ENCODE measurements at regions of chr2 and their contacts with region 1.

Region 1: DNA sequence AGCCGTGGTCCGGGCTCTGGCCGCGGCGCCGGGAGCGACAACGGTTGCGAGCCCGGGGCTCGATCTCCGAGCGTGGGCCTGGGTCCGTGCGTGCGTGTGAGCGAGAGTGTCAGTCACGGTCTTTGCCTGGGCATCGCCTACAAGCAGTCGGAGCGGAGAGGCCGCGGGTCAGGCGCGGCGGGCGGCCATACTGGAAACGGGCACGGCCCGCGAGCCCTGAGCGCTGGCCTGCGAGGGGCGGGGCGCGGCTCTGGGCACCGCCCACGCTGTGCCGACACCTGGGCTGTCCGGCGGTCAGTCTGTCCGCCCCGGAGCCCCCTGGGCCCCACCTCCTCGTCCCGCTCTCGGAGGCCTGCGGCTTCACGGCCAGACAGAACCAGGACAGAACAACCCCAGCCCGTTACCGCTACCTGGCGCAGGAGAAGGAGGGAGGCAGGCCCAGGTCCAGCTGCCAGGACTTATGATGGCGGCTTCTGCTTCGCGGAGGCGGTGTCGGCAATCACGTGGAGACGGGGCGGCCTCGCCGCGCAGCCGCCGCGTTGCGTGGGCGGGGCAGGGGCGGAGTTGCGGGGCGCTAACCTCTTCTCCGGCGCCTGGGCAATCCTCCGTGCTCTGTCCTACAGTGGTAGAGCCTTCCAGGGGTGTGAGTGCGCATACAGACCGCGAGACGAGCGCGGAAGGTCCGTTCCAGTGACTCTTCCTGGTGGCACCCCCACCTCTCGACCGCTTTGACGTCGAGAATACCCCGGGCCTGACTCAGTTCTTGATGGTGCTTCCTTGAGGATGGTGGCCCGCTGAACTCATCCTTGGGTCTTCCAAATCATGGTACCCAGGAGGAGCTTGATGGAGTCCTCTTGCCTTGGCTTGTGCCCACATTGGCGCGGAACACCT is at the start of gene TMEM131:
- DNase-seq: peak; percentile 91
- ATAC-seq: peak; percentile 85
- H3K4me3 ChIP-seq: peak within 1 kb of the TSS; percentile 98
- H3K27ac ChIP-seq: peak within 1 kb of the TSS; percentile 75
- H3K4me1 ChIP-seq: peaks cover 43% of the 10 kb centered on the region
- H3K27me3 ChIP-seq: no peaks in the 10 kb centered on the region
- CTCF ChIP-seq: no peak
- total RNA-seq, gene TMEM131: 21.1 and 27.2 TPM in 2 replicates

Region 2: GRCh38 chr2:97740590-97741182 is 255.3 kb before region 1 on chr2:
- CTCF ChIA-PET with region 1: no interaction called
- POLR2A ChIA-PET with region 1: no interaction called
- intact Hi-C with region 1: no loop called
- DNase-seq: peak; percentile 49
- ATAC-seq: no peak
- H3K4me3 ChIP-seq: no peak overlapping the region
- H3K27ac ChIP-seq: no peak overlapping the region
- H3K4me1 ChIP-seq: peaks cover 11% of the 10 kb centered on the region
- H3K27me3 ChIP-seq: no peaks in the 10 kb centered on the region
- CTCF ChIP-seq: peak; percentile 75

Region 3: DNA sequence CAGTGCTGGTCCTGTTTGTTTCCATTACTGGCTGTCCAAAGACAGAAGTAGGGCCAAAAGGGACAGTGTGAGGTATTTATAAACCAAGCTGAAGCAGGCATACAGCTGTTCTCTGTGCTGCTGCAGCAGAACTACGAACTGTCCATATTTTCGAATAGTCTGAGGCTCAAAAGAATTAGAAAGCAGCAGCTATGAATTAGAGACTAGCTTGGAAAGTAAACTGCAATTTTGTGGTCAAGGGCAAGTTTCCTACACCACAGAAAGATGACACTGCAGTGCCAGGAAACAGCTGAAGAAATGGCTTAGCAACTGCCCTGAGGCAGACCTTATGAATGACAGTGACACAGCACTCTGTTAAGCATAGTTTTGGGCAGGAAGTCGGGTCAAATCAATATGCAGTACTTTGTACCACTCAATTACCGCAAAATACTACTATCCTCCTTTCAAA is 125.6 kb before region 1 on chr2:
- CTCF ChIA-PET with region 1: no interaction called
- POLR2A ChIA-PET with region 1: interaction called, 3 read pairs
- intact Hi-C with region 1: loop called (anchors 1 kb)
- DNase-seq: peak; percentile 95
- ATAC-seq: peak; percentile 57
- H3K4me3 ChIP-seq: peak overlapping the region; percentile 50
- H3K27ac ChIP-seq: peak overlapping the region; percentile 100
- H3K4me1 ChIP-seq: peaks cover 57% of the 10 kb centered on the region
- H3K27me3 ChIP-seq: no peaks in the 10 kb centered on the region
- CTCF ChIP-seq: no peak

Region 4: GRCh38 chr2:97906307-97906706 is 89.7 kb before region 1 on chr2:
- CTCF ChIA-PET with region 1: no interaction called
- POLR2A ChIA-PET with region 1: no interaction called
- intact Hi-C with region 1: loop called (anchors 1 kb)
- DNase-seq: peak; percentile 3
- ATAC-seq: no peak
- H3K4me3 ChIP-seq: no peak overlapping the region
- H3K27ac ChIP-seq: no peak overlapping the region
- H3K4me1 ChIP-seq: no peaks in the 10 kb centered on the region
- H3K27me3 ChIP-seq: no peaks in the 10 kb centered on the region
- CTCF ChIP-seq: no peak

Region 5: DNA sequence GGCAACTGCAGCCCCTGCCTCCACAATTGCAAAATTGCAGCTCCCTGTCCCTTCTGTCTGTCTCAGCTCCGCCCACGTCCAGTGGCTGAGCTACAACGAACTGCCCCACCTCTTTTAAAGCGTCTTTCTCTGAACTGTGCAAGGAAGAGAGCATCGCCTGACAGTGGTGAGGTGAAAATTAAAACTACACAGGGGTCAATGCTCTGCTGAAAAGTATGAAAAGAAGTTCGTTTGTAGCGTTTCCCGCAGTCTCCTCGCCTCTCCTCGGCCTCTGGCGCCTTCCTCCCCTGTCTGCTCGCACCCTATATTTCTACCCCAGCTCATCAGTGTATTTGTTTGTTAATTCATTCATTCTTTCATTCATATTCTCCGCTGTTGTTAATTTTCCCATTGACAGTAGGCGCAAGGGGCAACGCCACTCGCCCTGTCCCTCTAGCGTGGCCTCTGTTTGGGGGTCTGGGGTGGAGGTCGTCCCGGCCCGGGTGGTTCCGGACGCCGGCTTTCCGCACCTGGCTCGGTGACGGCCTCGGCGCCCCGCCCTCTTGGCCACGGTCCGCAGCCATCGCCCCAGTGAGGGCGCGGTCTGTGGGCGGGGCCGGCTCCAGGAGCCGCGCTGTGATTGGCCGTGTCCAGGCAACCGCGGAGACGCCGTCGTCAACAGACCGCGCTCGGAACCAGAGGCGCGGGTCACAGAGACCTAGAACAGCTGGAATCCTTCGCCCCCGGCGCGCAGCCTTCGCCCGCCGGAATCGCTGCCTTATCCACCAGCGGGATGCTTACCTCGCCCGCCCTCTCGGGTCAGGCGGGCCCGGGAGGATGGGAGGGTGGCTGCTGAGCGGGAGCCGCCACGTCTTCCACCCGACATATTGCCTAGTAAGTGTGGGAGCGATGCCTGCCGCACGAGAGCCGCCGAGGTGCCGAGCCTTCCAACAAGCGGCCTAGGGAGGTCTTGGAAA is 90.8 kb after region 1 on chr2 and contains the start of gene VWA3B:
- CTCF ChIA-PET with region 1: no interaction called
- POLR2A ChIA-PET with region 1: no interaction called
- intact Hi-C with region 1: loop called (anchors 10 kb)
- DNase-seq: peak; percentile 86
- ATAC-seq: peak; percentile 95
- H3K4me3 ChIP-seq: peak within 1 kb of the TSS; percentile 70
- H3K27ac ChIP-seq: no peak within 1 kb of the TSS
- H3K4me1 ChIP-seq: peaks cover 9% of the 10 kb centered on the region; the same call in 1 of the 2 replicates
- H3K27me3 ChIP-seq: no peaks in the 10 kb centered on the region
- CTCF ChIP-seq: no peak
- total RNA-seq, gene VWA3B: not detected in 2 replicates